HEK293 (cell line): ENCODE measurements at regions of chr7 and their contacts with region 1.

Region 1: DNA sequence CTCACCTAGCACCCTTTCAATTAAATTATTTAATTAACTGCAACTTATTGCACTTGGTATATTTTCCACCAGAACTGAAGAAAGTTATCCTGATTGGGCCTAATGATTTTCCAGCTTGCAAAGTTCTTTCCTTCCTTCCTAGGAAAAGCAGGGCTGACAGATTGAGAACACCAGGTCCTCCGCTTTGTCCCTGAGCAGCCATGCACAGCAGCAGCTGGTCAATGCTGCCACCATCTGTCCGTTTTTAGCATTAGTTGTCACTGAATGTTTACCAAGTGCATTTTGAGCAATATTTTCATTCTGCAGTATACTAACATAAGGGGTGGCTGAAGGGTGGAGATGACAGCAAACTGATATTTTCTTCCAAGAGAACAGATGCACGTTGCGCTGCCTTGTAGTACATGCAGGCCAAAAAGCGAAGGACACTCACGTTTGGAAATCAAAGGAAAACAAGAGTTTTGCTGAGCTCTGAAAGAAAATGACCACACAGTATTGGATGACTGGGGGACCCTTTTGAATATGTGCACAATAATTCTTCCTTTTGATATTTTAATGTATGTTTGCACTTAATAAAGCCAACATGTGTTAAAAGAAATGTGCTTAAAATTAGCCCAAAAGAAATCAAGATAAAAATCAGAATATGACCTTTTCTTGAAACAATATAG is 248.8 kb upstream of the PTN start:
- H3K4me3 ChIP-seq: no peak overlapping the region
- H3K27ac ChIP-seq: no peak overlapping the region
- H3K4me1 ChIP-seq: no peaks in the 10 kb centered on the region
- CTCF ChIP-seq: peak; percentile 52

Region 2: DNA sequence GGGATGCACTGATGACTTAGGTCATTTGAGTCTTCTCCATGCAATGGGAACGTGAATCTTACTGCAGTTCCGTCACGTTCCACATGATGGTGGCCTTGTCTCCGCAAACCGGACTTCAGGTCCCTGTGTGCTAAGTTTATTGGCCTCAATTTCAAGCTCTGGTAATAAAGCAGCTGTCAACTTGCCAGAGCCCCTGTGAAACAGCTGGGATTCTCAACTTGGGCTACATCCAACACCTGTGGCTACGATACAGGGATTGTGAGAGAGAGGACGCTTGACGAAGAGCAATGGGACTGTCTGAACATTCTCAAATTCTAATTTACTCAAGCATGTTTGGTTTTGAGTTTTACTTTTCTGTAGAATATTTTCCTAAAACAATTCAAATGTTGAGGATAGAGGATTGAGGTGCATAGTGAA is 423.1 kb before region 1 on chr7:
- CTCF ChIA-PET with region 1: interaction called, 30 read pairs
- POLR2A ChIA-PET with region 1: no interaction called
- H3K4me3 ChIP-seq: no peak overlapping the region
- H3K27ac ChIP-seq: no peak overlapping the region
- H3K4me1 ChIP-seq: no peaks in the 10 kb centered on the region
- CTCF ChIP-seq: 0 out of 2 replicates have a peak, but pooled peaks have one; percentile 15

Region 3: GRCh38 chr7:137454246-137454724 is 138.1 kb before region 1 on chr7:
- CTCF ChIA-PET with region 1: interaction called, 18 read pairs
- POLR2A ChIA-PET with region 1: no interaction called
- H3K4me3 ChIP-seq: no peak overlapping the region
- H3K27ac ChIP-seq: no peak overlapping the region
- H3K4me1 ChIP-seq: no peaks in the 10 kb centered on the region
- CTCF ChIP-seq: no peak

Region 4: GRCh38 chr7:137579913-137580640 is 12.3 kb before region 1 on chr7:
- CTCF ChIA-PET with region 1: interaction called, 23 read pairs
- POLR2A ChIA-PET with region 1: no interaction called
- H3K4me3 ChIP-seq: no peak overlapping the region
- H3K27ac ChIP-seq: no peak overlapping the region
- H3K4me1 ChIP-seq: no peaks in the 10 kb centered on the region
- CTCF ChIP-seq: no peak

Region 5: GRCh38 chr7:137670199-137671071 is 78.1 kb after region 1 on chr7:
- CTCF ChIA-PET with region 1: no interaction called
- POLR2A ChIA-PET with region 1: no interaction called
- H3K4me3 ChIP-seq: no peak overlapping the region
- H3K27ac ChIP-seq: no peak overlapping the region
- H3K4me1 ChIP-seq: no peaks in the 10 kb centered on the region
- CTCF ChIP-seq: no peak